ENCODE measurements at regions of chr2 and their contacts with region 1.

Region 1: GRCh38 chr2:231604685-231605606 is 12.3 kb downstream of the TEX44 start:
- DNase-seq: peak; percentile 93 to 99
- H3K4me3 ChIP-seq: peak overlapping the region; percentile 25 to 56 (median 30); a peak in 7 of 8 replicates
- H3K27ac ChIP-seq: peak overlapping the region; percentile 94
- H3K4me1 ChIP-seq: peaks cover 6 to 29% (median 21%) of the 10 kb centered on the region in 4 experiments
- H3K27me3 ChIP-seq: no peaks in the 10 kb centered on the region
- CTCF ChIP-seq: no peak
- EP300 ChIP-seq: peak in 1 of 2 experiments; percentile 30; a peak in 1 of 3 replicates
- POLR2A ChIP-seq: peak in 1 of 2 experiments; percentile 83; a peak in 1 of 3 replicates
- RAD21 ChIP-seq: peak in 1 of 2 experiments; percentile 18; a peak in 2 of 4 replicates

Region 2: DNA sequence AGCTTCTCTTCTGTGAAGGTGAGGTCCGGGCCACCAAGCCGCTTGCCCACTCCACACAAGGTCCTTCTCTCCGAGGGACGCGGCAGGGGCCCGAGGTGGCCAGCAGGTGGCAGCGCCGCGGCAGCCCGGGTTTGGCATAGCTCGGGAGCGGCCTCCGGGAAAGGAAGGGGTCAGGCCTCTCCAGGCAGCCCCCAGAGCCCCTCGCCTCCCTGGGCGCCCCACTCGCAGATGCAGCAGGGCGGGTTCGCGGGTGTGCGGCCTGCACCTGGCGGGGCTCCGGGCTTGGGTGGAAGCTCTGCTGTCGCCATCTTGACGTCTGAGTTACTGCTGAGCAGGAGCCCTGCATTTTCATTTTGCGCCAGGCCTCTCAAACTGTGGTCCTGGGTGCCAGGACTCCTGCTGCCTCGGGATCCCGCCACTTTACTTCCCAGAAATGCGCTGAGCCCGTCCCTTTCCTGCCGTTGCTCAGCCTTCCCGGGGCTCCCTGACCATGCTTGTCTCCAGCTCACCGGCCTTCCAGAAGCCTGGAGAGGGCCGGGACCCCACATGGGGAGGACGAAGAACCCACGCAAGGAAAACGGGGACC is 122.0 kb before region 1 on chr2:
- CTCF ChIA-PET with region 1: interaction called, 15 read pairs
- POLR2A ChIA-PET with region 1: no interaction called
- DNase-seq: peak in 1 of 2 experiments; percentile 89
- H3K4me3 ChIP-seq: no peak overlapping the region
- H3K27ac ChIP-seq: no peak overlapping the region
- H3K4me1 ChIP-seq: peaks cover 0 to 2% (median 0%) of the 10 kb centered on the region in 4 experiments; a peak in 1 of 7 replicates
- H3K27me3 ChIP-seq: no peaks in the 10 kb centered on the region
- CTCF ChIP-seq: peak; percentile 75 to 85 (median 79)
- EP300 ChIP-seq: no peak
- POLR2A ChIP-seq: no peak
- RAD21 ChIP-seq: peak; percentile 37 to 67; a peak in 3 of 4 replicates

Region 3: DNA sequence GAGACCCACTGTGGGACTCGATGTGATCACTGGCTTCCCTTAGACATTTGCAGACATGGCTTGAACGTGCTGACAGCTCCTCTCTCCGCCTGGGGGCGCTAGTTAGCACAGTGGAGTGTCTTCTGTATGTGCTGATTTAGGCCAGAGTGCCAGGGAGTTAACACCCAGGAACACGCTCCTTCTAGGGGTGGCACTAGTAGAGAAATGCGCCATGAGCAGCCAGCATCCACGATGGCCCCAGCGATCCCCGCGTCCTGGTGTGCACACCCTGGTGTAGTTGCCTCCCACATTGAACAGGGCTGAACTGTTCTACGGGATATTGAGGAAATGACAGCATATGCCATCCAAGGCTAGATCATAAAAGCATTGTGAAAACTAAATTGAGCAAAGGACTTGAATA is 63.3 kb before region 1 on chr2:
- CTCF ChIA-PET with region 1: interaction called, 14 read pairs
- POLR2A ChIA-PET with region 1: interaction called, 4 read pairs
- DNase-seq: peak in 1 of 2 experiments; percentile 90
- H3K4me3 ChIP-seq: no peak overlapping the region
- H3K27ac ChIP-seq: no peak overlapping the region
- H3K4me1 ChIP-seq: 0 out of 7 replicates have a peak, but pooled peaks cover 0 to 2% (median 0%) of the 10 kb centered on the region in 4 experiments
- H3K27me3 ChIP-seq: no peaks in the 10 kb centered on the region
- CTCF ChIP-seq: peak; percentile 93 to 98 (median 93)
- EP300 ChIP-seq: no peak
- POLR2A ChIP-seq: no peak
- RAD21 ChIP-seq: peak; percentile 54 to 70; a peak in 3 of 4 replicates

Region 4: DNA sequence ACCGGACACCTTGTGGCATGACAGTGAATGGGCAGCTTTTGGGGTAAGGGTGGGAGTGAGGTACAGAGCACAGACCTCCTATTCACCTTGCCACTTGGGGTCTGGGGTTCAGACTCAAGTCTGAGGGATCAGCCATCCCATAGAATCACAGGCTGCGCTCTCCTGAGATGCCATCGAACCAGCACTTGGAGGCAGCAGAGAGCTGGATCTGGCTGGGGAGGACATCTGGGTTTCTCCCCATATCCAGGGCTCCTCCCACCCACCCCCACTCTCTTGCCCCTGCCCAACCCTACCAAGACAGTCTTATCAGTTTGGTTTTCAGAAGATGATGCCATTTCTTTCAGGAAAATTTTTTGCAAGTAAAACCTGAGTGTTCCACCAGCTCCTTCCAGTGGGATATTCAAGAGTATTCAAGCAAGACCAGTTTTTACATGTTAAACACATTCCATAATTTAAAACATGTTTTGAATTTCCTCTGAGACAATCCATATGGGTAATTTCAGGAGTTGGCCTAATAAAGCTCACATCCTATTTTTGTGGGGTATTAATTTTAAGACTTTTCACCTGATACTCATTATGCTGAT is 41.5 kb before region 1 on chr2:
- CTCF ChIA-PET with region 1: interaction called, 368 read pairs
- POLR2A ChIA-PET with region 1: interaction called, 10 read pairs
- DNase-seq: peak; percentile 73 to 78
- H3K4me3 ChIP-seq: no peak overlapping the region
- H3K27ac ChIP-seq: no peak overlapping the region
- H3K4me1 ChIP-seq: peaks cover 0 to 5% (median 3%) of the 10 kb centered on the region in 4 experiments; a peak in 5 of 7 replicates
- H3K27me3 ChIP-seq: no peaks in the 10 kb centered on the region
- CTCF ChIP-seq: peak; percentile 90 to 95 (median 93)
- EP300 ChIP-seq: no peak
- POLR2A ChIP-seq: no peak
- RAD21 ChIP-seq: peak; percentile 92

Region 5: GRCh38 chr2:231590619-231591018 is 14.3 kb before region 1 on chr2:
- CTCF ChIA-PET with region 1: interaction called, 83 read pairs
- POLR2A ChIA-PET with region 1: interaction called, 11 read pairs
- DNase-seq: no peak
- H3K4me3 ChIP-seq: no peak overlapping the region
- H3K27ac ChIP-seq: no peak overlapping the region
- H3K4me1 ChIP-seq: peaks cover 0 to 6% (median 2%) of the 10 kb centered on the region in 4 experiments; a peak in 2 of 7 replicates
- H3K27me3 ChIP-seq: no peaks in the 10 kb centered on the region
- CTCF ChIP-seq: no peak
- EP300 ChIP-seq: no peak
- POLR2A ChIP-seq: no peak
- RAD21 ChIP-seq: no peak

Region 6: DNA sequence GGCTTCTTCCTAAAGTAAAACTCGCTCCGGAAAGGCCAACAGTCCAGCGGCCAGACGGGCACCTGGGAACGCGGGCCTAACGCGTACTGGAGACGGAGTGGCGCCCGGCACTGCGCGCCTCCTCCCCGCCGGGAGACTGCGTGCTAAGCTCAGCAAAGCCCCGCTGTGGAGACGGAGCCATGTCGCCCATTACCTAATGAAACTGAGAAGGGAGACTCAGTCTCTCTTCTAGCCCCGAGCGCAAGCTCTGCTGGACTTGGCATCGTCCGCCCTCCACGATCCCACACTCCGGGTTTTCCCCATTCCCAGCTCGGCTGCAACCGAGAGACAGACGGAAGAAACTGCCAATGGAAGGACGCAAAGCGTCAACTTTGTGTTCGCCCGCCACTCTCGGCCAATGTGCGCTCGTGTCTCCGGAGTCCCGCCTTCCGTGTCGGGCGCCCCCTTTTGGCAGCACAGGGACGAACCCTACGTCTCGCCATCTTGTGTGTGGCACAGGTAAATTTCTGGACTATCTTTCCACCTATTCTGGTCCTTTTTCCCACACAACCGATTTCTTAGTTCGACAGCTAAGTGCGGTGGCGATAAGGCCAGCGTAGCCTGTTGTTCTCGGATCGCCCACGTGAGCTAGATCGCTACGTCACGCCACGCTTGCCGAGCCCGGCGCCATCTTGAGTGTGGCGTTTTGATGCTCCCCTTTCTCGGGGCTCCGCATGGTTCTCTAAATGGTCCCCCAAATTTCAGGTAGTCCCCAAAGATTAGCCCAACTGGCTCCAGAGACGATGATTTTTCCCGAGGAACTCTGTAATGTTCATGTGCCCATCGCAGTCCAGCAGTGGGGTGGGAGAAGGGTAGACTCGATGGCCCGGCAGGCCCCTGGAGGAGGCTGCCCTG is 102.0 kb after region 1 on chr2:
- CTCF ChIA-PET with region 1: interaction called, 5 read pairs
- POLR2A ChIA-PET with region 1: interaction called, 141 read pairs
- DNase-seq: peak; percentile 96 to 98
- H3K4me3 ChIP-seq: peak overlapping the region; percentile 85 to 96 (median 90)
- H3K27ac ChIP-seq: peak overlapping the region; percentile 99
- H3K4me1 ChIP-seq: peaks cover 0 to 14% (median 8%) of the 10 kb centered on the region in 4 experiments; a peak in 6 of 7 replicates
- H3K27me3 ChIP-seq: no peaks in the 10 kb centered on the region
- CTCF ChIP-seq: peak in 2 of 3 experiments; percentile 72 to 98; a peak in 3 of 4 replicates
- EP300 ChIP-seq: no peak
- POLR2A ChIP-seq: peak in 1 of 2 experiments; percentile 96; a peak in 2 of 3 replicates
- RAD21 ChIP-seq: no peak; a peak in 1 of 4 replicates

Region 7: GRCh38 chr2:231861532-231861931 is 256.6 kb after region 1 on chr2:
- CTCF ChIA-PET with region 1: no interaction called
- POLR2A ChIA-PET with region 1: no interaction called
- DNase-seq: no peak
- H3K4me3 ChIP-seq: no peak overlapping the region
- H3K27ac ChIP-seq: no peak overlapping the region
- H3K4me1 ChIP-seq: no peaks in the 10 kb centered on the region
- H3K27me3 ChIP-seq: no peaks in the 10 kb centered on the region
- CTCF ChIP-seq: no peak
- EP300 ChIP-seq: no peak
- POLR2A ChIP-seq: no peak
- RAD21 ChIP-seq: no peak

Measured in H1 (cell line).